Dendritic cell treated with granulocyte-macrophage colony-stimulating factor and Interleukin-4, amounts not matched to agents 40 ng/mL and 50 ng/mL, for 4 days (primary cell): ENCODE measurements at regions of chr9 and their contacts with region 1.

Region 1: GRCh38 chr9:36102742-36103495 is 33.6 kb upstream of the GLIPR2 start:
- H3K4me3 Mint-ChIP-seq: no peak overlapping the region
- H3K27ac Mint-ChIP-seq: peak overlapping the region; percentile 43
- H3K4me1 Mint-ChIP-seq: peaks cover 8% of the 10 kb centered on the region
- H3K27me3 Mint-ChIP-seq: no peaks in the 10 kb centered on the region

Region 2: GRCh38 chr9:35903049-35903448 is 199.9 kb before region 1 on chr9:
- intact Hi-C with region 1: no loop called
- H3K4me3 Mint-ChIP-seq: no peak overlapping the region
- H3K27ac Mint-ChIP-seq: no peak overlapping the region
- H3K4me1 Mint-ChIP-seq: peaks cover 29% of the 10 kb centered on the region
- H3K27me3 Mint-ChIP-seq: peaks cover 48% of the 10 kb centered on the region

Region 3: DNA sequence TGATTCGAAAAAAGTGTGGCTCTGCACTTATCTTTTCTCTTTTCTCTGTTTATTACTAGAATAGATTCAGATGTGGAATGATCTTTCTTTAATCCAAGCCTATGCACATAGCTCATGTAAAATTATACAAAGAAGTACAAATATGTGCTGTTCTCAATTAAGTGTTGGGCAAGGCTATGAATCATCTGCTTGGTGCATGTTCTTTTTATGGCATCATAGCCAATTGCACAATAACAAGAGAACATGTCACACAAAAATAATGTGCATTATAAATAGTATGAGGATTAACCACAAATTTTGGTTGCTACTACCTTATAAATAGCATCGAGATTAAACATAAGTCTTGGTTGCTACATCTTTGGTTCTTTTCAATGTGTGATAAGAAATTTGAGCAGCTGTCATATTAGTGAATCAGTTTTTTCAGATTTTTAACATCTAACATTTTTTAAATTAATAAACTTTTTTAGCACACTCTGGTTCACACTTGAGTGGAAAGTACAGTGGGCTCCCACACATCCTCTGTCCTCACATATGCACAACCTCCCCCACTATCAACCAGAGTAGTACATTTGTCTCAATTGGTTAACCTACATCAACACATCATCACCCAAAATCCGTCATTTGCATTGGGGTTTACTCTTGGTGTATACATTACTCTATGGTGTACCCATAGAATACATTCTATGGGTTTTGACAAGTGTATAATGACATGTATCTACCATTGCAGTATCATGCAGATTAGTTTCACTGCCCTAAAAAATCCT is 73.0 kb before region 1 on chr9:
- intact Hi-C with region 1: no loop called
- H3K4me3 Mint-ChIP-seq: no peak overlapping the region
- H3K27ac Mint-ChIP-seq: no peak overlapping the region
- H3K4me1 Mint-ChIP-seq: no peaks in the 10 kb centered on the region
- H3K27me3 Mint-ChIP-seq: no peaks in the 10 kb centered on the region

Region 4: DNA sequence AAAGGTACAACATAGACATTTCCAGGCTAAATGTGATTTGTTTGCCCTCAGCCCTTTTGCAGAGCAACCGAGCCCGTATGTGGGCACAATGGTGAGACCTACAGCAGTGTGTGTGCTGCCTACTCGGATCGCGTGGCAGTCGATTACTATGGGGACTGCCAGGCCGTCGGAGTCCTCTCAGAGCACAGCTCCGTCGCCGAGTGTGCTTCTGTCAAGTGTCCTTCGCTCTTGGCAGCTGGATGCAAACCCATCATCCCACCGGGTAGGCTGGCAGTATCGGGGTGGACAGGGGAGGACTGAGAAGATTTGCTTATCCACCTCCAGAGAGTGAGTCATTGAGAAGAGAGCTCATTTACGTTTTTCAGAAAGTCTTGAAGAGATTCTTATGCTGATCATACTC is 15.8 kb after region 1 on chr9:
- intact Hi-C with region 1: no loop called
- H3K4me3 Mint-ChIP-seq: no peak overlapping the region
- H3K27ac Mint-ChIP-seq: no peak overlapping the region
- H3K4me1 Mint-ChIP-seq: peaks cover 25% of the 10 kb centered on the region
- H3K27me3 Mint-ChIP-seq: no peaks in the 10 kb centered on the region

Region 5: GRCh38 chr9:36136272-36136893 is 33.5 kb after region 1 on chr9 and contains the start of gene GLIPR2:
- intact Hi-C with region 1: loop called (anchors 5 kb)
- H3K4me3 Mint-ChIP-seq: peak within 1 kb of the TSS; percentile 98
- H3K27ac Mint-ChIP-seq: peak within 1 kb of the TSS; percentile 93
- H3K4me1 Mint-ChIP-seq: peaks cover 60% of the 10 kb centered on the region
- H3K27me3 Mint-ChIP-seq: peaks cover 3% of the 10 kb centered on the region

Region 6: DNA sequence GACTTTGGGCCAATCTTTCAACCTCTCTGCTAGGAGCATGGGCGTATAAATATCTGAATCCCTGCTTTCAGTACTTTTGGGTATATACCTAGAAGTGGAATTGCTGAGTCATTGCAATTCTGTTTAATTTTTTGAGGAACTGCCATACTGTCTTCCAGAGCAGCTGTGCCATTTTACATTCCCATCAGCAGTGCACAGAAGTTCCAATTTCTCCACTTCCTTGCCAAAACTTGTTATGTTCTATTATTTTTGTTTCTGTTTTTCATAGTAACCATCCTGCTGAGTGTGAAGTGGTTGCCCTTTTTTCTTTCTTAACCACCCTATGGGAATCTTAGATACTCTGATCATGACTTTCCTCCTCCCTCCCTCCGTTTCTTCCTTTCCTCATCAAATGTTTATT is 55.2 kb after region 1 on chr9:
- intact Hi-C with region 1: loop called (anchors 2 kb)
- H3K4me3 Mint-ChIP-seq: no peak overlapping the region
- H3K27ac Mint-ChIP-seq: peak overlapping the region; percentile 81
- H3K4me1 Mint-ChIP-seq: peaks cover 62% of the 10 kb centered on the region
- H3K27me3 Mint-ChIP-seq: no peaks in the 10 kb centered on the region

Region 7: GRCh38 chr9:36166101-36166927 is 63.4 kb after region 1 on chr9:
- intact Hi-C with region 1: loop called (anchors 1 kb)
- H3K4me3 Mint-ChIP-seq: peak overlapping the region; percentile 74
- H3K27ac Mint-ChIP-seq: peak overlapping the region; percentile 55
- H3K4me1 Mint-ChIP-seq: peaks cover 48% of the 10 kb centered on the region
- H3K27me3 Mint-ChIP-seq: peaks cover 35% of the 10 kb centered on the region